ENCODE measurements at regions of chr14 and their contacts with region 1.

Region 1: GRCh38 chr14:51651388-51652167 is at the start of gene FRMD6:
- DNase-seq: peak; percentile 84
- H3K4me3 Mint-ChIP-seq: peak within 1 kb of the TSS; percentile 80
- H3K27ac Mint-ChIP-seq: peak within 1 kb of the TSS; percentile 58
- H3K4me1 Mint-ChIP-seq: peaks cover 17% of the 10 kb centered on the region
- H3K27me3 Mint-ChIP-seq: no peaks in the 10 kb centered on the region
- CTCF ChIP-seq: peak; percentile 55
- total RNA-seq, gene FRMD6: 17.0 and 33.3 TPM in 2 replicates

Region 2: DNA sequence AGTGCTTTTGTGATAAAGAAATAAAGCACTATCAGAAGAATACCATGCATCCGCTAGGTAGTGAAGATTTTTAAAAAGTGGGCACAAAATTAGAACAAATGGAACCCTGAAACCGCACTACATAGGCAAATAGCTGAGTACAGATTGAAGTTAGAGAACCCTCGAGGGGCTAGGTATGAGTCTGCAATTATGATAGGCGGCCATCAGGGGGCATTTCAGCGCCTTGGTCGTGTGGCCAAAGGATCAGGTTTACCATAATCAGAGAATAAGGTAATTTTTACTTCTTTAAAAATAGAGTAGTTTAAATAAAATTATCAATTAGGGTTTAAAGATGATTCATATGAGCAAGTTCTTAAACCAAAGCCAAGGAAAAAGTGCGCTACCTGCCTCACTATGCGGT is 281.8 kb before region 1 on chr14:
- CTCF ChIA-PET with region 1: no interaction called
- intact Hi-C with region 1: loop called (anchors 5 kb)
- DNase-seq: peak; percentile 43
- H3K4me3 Mint-ChIP-seq: no peak overlapping the region
- H3K27ac Mint-ChIP-seq: no peak overlapping the region
- H3K4me1 Mint-ChIP-seq: peaks cover 8% of the 10 kb centered on the region
- H3K27me3 Mint-ChIP-seq: no peaks in the 10 kb centered on the region
- CTCF ChIP-seq: peak; percentile 35

Region 3: GRCh38 chr14:51566831-51567582 is 84.6 kb before region 1 on chr14:
- CTCF ChIA-PET with region 1: no interaction called
- intact Hi-C with region 1: no loop called
- DNase-seq: no peak
- H3K4me3 Mint-ChIP-seq: no peak overlapping the region
- H3K27ac Mint-ChIP-seq: no peak overlapping the region
- H3K4me1 Mint-ChIP-seq: no peaks in the 10 kb centered on the region
- H3K27me3 Mint-ChIP-seq: no peaks in the 10 kb centered on the region
- CTCF ChIP-seq: no peak

Region 4: DNA sequence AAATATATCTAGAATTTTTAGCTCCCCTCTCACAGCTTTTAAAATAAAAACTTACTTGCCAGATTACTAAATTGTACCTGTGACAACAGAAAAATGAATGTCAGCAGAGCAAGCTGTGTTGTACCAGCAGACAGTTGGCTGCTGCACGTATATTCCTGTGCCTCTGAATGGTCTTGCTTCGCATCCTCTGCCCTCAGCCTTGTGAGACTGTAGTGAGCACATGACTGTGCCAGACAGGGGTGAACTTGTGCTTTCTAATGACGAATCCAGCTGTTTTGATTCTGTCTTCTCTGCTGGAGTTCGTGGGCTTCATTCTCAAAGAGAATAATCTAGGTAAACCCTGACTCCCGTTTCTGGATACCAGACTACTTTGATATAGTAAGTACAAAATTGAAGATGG is 58.2 kb before region 1 on chr14:
- CTCF ChIA-PET with region 1: no interaction called
- intact Hi-C with region 1: no loop called
- DNase-seq: no peak
- H3K4me3 Mint-ChIP-seq: no peak overlapping the region
- H3K27ac Mint-ChIP-seq: no peak overlapping the region
- H3K4me1 Mint-ChIP-seq: no peaks in the 10 kb centered on the region
- H3K27me3 Mint-ChIP-seq: no peaks in the 10 kb centered on the region
- CTCF ChIP-seq: no peak